ENCODE measurements at regions of chr4 and their contacts with region 1.

Region 1: DNA sequence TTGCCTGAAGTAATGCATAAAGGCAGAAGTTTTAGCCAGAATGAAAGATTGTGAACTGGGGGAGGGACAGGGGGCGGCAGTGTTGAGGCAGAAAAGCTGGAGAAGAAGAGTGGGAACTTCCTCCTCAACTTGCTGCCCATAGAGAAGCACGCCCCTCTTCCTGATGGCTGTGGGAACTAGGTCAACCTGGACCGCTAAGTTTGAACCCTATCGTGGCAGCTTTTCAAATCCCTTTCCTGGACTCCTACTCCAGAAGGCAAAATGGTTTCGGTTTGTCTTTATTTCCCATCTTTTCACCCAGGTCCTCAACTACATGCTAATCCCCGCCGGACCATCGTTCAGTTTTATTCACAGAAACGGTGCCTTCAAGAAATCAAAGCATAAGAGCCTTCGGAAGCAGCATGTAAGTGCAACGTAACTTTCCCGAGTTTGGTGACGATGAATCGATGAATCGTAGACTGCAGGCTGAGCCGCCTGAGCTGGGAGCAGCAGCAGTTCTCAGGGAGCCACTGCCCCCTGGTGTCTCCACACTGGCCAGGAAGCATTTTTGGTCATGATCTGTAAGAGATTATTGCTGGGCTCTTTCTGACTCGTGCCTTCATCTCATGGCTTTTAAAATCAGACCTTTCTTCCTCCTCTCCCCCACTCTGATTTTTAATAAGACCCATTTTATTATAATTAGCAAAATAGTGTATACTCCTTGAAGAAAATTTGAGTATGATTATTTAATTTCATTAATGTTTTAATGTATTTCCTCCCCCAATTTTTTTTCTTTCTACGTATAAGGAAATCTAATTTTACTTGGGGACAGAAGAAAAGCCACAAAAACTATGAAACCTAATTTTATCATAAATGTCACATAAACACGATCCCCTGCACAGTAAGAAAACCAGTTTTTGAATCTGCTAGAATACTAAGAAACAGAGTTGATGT is 21.4 kb downstream of the SPINK2 start:
- DNase-seq: peak; percentile 85
- ATAC-seq: peak; percentile 95
- H3K4me3 Mint-ChIP-seq: peak overlapping the region; percentile 82
- H3K27ac Mint-ChIP-seq: peak overlapping the region; percentile 36; the same call in 1 of the 2 replicates
- H3K4me1 Mint-ChIP-seq: peaks cover 3% of the 10 kb centered on the region; the same call in 1 of the 2 replicates
- H3K27me3 Mint-ChIP-seq: peaks cover 17% of the 10 kb centered on the region
- CTCF ChIP-seq: peak; percentile 60

Region 2: DNA sequence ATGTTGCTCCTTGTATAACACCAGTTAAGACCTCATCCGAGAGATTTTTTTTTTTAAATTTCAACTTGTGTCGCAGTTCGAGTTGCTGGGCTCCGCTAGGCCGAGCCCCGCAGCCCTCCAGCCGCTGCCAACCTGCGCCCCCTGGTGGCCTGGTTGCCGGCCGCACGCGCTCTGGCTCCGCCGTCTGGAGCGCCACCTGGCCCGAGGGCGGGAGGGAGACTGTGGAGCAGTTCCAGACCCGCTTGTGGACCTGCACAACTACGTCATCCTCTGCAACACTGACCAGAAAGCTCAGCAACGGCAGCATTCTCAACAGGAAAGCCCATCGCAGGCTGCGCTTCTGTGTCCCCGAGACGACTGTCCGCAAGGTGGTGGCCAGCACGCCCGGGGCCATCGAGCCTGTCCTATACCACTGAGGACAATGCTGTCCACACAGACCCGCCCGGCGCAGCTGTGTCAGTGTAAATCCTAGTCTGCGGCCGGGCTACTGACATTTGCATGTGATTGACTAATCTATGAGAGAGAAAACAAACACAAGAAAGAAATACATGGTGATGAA is 255.4 kb before region 1 on chr4:
- CTCF ChIA-PET with region 1: interaction called, 15 read pairs
- POLR2A ChIA-PET with region 1: no interaction called
- DNase-seq: peak; percentile 90
- ATAC-seq: peak; percentile 98
- H3K4me3 Mint-ChIP-seq: peak overlapping the region; percentile 63
- H3K27ac Mint-ChIP-seq: no peak overlapping the region
- H3K4me1 Mint-ChIP-seq: peaks cover 4% of the 10 kb centered on the region; the same call in 1 of the 2 replicates
- H3K27me3 Mint-ChIP-seq: peaks cover 54% of the 10 kb centered on the region
- CTCF ChIP-seq: peak; percentile 91

Region 3: GRCh38 chr4:56575820-56576429 is 224.2 kb before region 1 on chr4:
- CTCF ChIA-PET with region 1: interaction called, 13 read pairs
- POLR2A ChIA-PET with region 1: no interaction called
- DNase-seq: no peak
- ATAC-seq: no peak
- H3K4me3 Mint-ChIP-seq: no peak overlapping the region
- H3K27ac Mint-ChIP-seq: no peak overlapping the region
- H3K4me1 Mint-ChIP-seq: no peaks in the 10 kb centered on the region
- H3K27me3 Mint-ChIP-seq: peaks cover 10% of the 10 kb centered on the region; the same call in 1 of the 2 replicates
- CTCF ChIP-seq: no peak

Region 4: GRCh38 chr4:56668298-56668697 is 131.8 kb before region 1 on chr4:
- CTCF ChIA-PET with region 1: interaction called, 20 read pairs
- POLR2A ChIA-PET with region 1: no interaction called
- DNase-seq: peak; percentile 26
- ATAC-seq: peak; percentile 68
- H3K4me3 Mint-ChIP-seq: no peak overlapping the region
- H3K27ac Mint-ChIP-seq: no peak overlapping the region
- H3K4me1 Mint-ChIP-seq: peaks cover 5% of the 10 kb centered on the region
- H3K27me3 Mint-ChIP-seq: peaks cover 48% of the 10 kb centered on the region
- CTCF ChIP-seq: peak; percentile 34

Region 5: DNA sequence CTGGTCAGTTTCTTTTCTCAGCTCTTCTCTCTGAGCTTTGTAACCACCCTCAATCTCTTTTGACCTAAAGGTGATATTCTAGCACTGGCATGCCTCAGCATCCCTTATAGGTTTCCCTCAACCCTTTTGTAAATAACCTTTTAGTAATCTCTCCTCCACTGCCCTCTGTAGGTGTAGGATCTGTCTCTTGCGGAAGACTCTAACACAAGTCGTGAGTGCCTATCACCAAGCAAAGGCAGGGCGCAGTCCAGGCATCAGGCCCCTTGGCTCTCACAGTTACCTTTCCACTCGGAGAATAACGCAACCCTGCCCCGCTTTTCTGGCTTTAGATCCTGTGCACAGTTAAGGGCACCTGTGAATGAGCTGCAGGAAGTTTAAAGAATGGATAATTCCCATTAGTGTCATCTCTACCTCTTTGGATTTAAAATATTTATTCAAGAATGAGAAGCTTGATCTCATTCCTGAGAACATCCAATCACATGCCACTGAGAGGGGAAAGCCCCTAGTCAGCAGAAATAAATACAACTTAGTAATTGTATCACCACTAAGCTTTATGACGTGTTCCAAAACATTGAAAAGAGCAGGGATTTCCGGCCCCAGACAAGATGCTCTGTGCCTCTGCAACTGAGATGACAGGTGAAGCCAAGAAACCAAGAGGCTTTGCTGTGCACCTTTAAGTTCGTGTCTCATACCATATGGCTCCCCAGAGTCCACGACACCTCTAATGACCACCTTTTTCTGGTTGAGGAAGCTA is 37.4 kb before region 1 on chr4:
- CTCF ChIA-PET with region 1: interaction called, 10 read pairs
- POLR2A ChIA-PET with region 1: no interaction called
- DNase-seq: no peak
- ATAC-seq: peak; percentile 50
- H3K4me3 Mint-ChIP-seq: no peak overlapping the region
- H3K27ac Mint-ChIP-seq: no peak overlapping the region
- H3K4me1 Mint-ChIP-seq: peaks cover 28% of the 10 kb centered on the region
- H3K27me3 Mint-ChIP-seq: no peaks in the 10 kb centered on the region
- CTCF ChIP-seq: no peak

Region 6: DNA sequence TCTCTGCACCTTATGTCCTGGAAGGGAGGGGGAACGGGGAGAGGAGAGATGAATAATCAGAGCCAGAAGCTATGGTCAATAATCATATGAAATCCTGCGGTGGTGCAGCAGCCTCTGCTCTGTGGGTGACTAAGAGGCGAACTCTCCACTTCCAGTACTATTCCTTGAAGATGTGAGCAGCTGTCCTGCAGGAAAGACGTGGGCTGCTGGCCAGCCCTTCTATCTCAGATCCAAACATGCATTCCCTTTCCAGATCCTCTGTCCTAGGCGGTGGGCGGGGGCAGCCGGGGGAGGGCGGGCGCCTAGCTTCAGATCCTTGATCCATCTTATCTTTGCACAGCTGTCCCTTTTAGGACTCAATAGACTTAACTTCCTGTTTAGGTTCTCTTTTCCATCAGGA is 13.1 kb before region 1 on chr4:
- CTCF ChIA-PET with region 1: interaction called, 10 read pairs
- POLR2A ChIA-PET with region 1: no interaction called
- DNase-seq: no peak
- ATAC-seq: peak; percentile 71
- H3K4me3 Mint-ChIP-seq: no peak overlapping the region
- H3K27ac Mint-ChIP-seq: no peak overlapping the region
- H3K4me1 Mint-ChIP-seq: peaks cover 18% of the 10 kb centered on the region
- H3K27me3 Mint-ChIP-seq: peaks cover 3% of the 10 kb centered on the region; the same call in 1 of the 2 replicates
- CTCF ChIP-seq: no peak

Region 7: GRCh38 chr4:56821381-56822243 is 21.5 kb after region 1 on chr4 and contains the start of gene SPINK2:
- CTCF ChIA-PET with region 1: interaction called, 15 read pairs
- POLR2A ChIA-PET with region 1: no interaction called
- DNase-seq: peak; percentile 90
- ATAC-seq: peak; percentile 96
- H3K4me3 Mint-ChIP-seq: peak within 1 kb of the TSS; percentile 76
- H3K27ac Mint-ChIP-seq: no peak within 1 kb of the TSS
- H3K4me1 Mint-ChIP-seq: peaks cover 6% of the 10 kb centered on the region; the same call in 1 of the 2 replicates
- H3K27me3 Mint-ChIP-seq: peaks cover 67% of the 10 kb centered on the region
- CTCF ChIP-seq: no peak
- total RNA-seq, gene SPINK2: 0.92 to 1.6 TPM (median 1.3 TPM) in 3 replicates